Naive thymus-derived CD8-positive, alpha-beta T cell (primary cell): ENCODE measurements at regions of chr3 and their contacts with region 1.

Region 1: DNA sequence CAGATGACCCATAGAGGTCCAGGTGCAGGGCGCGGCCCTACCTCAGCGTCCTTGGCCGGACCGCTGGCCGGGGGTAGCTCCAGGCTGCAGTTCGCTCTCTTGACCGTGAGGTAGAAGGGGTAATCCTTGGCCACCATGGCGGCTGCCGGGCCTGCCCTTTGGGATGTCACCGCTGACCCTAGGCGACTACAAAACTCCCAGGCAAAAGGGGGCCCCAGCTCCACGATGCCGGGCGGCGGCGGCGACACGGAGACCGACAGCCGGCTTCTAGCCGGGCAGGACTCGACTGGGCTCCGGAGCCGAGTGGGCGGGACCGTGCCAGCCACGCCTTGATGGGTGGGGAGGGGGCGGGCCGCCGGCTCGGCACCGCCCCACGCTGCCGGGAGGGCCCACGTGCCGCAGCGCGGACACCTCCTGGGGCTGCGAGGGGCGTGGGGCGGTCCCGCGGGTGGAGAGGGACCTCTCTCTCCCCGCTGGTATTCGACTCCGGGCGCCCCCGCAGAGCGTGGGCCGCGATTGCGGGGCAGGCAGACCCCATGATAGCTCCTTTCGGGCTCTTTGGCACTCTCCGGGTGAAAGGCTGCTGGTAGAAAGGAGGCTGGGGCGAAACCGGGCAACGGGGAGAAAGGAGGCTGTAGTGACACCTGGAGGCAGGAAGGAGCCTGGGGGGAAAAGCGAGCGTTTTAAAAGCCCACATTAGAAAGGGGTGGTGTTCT is at the start of gene ARHGEF3:
- DNase-seq: peak; percentile 81 to 95 (median 90)
- ATAC-seq: peak; percentile 76 to 83
- H3K4me3 Mint-ChIP-seq: peak within 1 kb of the TSS; percentile 91 to 100 (median 96)
- H3K27ac Mint-ChIP-seq: peak within 1 kb of the TSS; percentile 79 to 96 (median 92)
- H3K4me1 Mint-ChIP-seq: peaks cover 17 to 50% (median 32%) of the 10 kb centered on the region in 4 donors
- H3K27me3 Mint-ChIP-seq: no peaks in the 10 kb centered on the region
- polyA plus RNA-seq, gene ARHGEF3: 95.3 to 101 (median 96.9) TPM

Region 2: GRCh38 chr3:56693750-56694149 is 108.1 kb before region 1 on chr3:
- POLR2A ChIA-PET with region 1: interaction called, 26 read pairs
- DNase-seq: no peak
- ATAC-seq: no peak
- H3K4me3 Mint-ChIP-seq: peak overlapping the region in 9 of 10 donors; percentile 39 to 90 (median 84)
- H3K27ac Mint-ChIP-seq: peak overlapping the region; percentile 56 to 94 (median 86)
- H3K4me1 Mint-ChIP-seq: peaks cover 26 to 47% (median 46%) of the 10 kb centered on the region in 4 donors
- H3K27me3 Mint-ChIP-seq: no peaks in the 10 kb centered on the region

Region 3: DNA sequence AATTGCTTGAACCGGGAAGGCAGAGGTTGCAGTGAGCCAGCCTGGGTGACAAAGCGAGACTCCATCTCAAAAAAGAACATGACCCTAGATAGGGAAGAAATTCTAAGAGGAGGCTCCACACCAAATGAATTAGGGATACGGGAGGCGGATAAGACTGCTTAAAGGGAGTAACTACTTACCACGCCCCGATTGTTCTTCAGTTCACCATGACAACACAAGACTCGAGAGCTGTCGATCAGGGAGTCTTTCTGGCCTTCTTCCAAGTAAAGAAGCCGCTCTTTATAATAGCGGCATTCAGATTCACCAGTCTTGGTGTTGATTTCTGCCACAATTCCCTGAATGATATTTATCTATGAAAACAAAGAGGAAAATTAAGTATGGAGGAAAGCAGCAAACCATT is 64.8 kb before region 1 on chr3:
- POLR2A ChIA-PET with region 1: interaction called, 20 read pairs
- DNase-seq: no peak
- ATAC-seq: no peak
- H3K4me3 Mint-ChIP-seq: peak overlapping the region in 1 of 10 donors; percentile 41
- H3K27ac Mint-ChIP-seq: peak overlapping the region in 9 of 10 donors; percentile 14 to 94 (median 68)
- H3K4me1 Mint-ChIP-seq: peaks cover 26 to 54% (median 41%) of the 10 kb centered on the region in 4 donors
- H3K27me3 Mint-ChIP-seq: no peaks in the 10 kb centered on the region

Region 4: DNA sequence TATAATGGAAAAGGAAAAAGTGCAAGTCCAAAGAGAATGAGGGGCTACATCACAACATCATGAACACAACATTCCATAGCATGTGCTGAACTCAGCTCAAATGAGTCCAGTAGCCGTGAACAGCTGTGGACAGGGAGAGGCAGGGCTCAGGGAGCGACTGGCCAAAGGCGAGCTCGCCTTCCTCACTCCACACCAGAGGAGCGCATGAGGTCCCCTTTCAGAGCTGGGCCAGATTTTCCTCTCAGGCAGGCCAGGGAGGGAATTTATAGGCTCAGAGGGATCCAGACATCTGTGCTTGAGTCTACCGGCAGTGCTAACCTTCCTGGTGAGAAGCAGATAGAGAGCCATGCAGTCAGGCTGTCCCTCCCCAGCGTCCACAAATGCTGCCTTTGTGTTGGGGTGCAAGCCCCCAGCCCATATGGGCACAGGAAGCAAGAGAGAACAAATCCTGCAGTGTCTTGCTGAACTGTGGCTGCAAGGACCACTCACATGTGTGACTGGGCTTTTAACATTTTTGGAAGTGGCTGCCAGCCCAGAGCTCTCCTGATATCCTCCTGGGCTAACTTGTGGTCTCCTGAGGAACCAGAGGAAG is 32.6 kb before region 1 on chr3:
- POLR2A ChIA-PET with region 1: interaction called, 13 read pairs
- DNase-seq: no peak
- ATAC-seq: no peak
- H3K4me3 Mint-ChIP-seq: peak overlapping the region in 4 of 10 donors; percentile 4 to 40 (median 38)
- H3K27ac Mint-ChIP-seq: peak overlapping the region; percentile 47 to 91 (median 76)
- H3K4me1 Mint-ChIP-seq: peaks cover 44 to 77% (median 72%) of the 10 kb centered on the region in 4 donors
- H3K27me3 Mint-ChIP-seq: no peaks in the 10 kb centered on the region

Region 5: DNA sequence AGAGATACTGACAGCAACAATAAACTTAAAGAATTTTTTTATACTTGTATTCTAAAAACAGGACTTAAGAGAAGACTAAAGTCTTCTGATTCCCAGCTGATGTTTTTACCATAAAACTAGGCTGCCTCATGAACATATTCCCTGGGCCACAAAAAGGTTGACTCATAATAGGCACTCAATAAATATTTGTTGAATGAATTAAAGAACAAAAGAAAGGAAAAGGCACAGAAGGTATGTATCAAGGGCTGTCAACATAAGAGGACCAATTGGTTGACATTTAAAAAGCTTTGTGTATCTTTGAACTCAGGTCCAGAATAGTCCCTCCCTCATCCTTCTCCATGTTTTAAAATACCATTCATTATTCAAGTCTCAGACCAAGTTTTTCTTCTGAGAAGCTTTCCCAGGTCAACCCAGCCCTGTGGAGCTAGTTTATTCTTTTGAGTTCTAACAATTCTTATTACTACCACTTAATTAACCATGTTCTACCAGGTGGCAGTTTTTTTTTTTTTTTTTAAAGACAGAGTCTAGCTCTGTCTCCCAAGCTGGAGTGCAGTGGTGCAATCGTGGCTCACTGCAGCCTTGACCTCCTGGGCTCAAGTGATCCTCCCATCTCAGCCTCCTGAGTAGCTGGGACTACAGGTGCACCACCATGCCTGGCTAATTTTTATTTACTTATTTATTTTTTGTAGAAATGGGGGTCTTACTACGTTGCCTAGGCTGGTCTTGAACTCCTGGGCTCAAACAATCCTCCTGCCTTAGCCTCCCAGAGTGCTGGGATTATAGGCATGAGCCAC is 17.4 kb after region 1 on chr3:
- POLR2A ChIA-PET with region 1: interaction called, 34 read pairs
- DNase-seq: no peak
- ATAC-seq: no peak
- H3K4me3 Mint-ChIP-seq: no peak overlapping the region
- H3K27ac Mint-ChIP-seq: peak overlapping the region in 7 of 10 donors; percentile 11 to 78 (median 31)
- H3K4me1 Mint-ChIP-seq: peaks cover 23 to 67% (median 55%) of the 10 kb centered on the region in 4 donors
- H3K27me3 Mint-ChIP-seq: no peaks in the 10 kb centered on the region

Region 6: GRCh38 chr3:56988458-56989168 is 186.8 kb after region 1 on chr3:
- POLR2A ChIA-PET with region 1: interaction called, 21 read pairs
- DNase-seq: peak; percentile 39 to 82 (median 68)
- ATAC-seq: peak; percentile 72 to 87
- H3K4me3 Mint-ChIP-seq: peak overlapping the region in 1 of 10 donors; percentile 52
- H3K27ac Mint-ChIP-seq: peak overlapping the region in 4 of 10 donors; percentile 46 to 75 (median 62)
- H3K4me1 Mint-ChIP-seq: peaks cover 11 to 17% (median 13%) of the 10 kb centered on the region in 4 donors
- H3K27me3 Mint-ChIP-seq: peaks cover 0 to 9% (median 6%) of the 10 kb centered on the region in 5 donors